ENCODE measurements at regions of chr10 and their contacts with region 1.

Region 1: GRCh38 chr10:71569775-71570588 is 149.6 kb downstream of the C10orf105 start:
- DNase-seq: peak; percentile 79 to 88
- H3K4me3 ChIP-seq: no peak overlapping the region
- H3K4me3 Mint-ChIP-seq: no peak overlapping the region
- H3K27ac Mint-ChIP-seq: no peak overlapping the region
- H3K4me1 ChIP-seq: no peaks in the 10 kb centered on the region
- H3K4me1 Mint-ChIP-seq: no peaks in the 10 kb centered on the region
- H3K27me3 ChIP-seq: no peaks in the 10 kb centered on the region
- H3K27me3 Mint-ChIP-seq: peaks cover 5% of the 10 kb centered on the region
- CTCF ChIP-seq: peak; percentile 94 to 95

Region 2: GRCh38 chr10:71303569-71303907 is 266.4 kb before region 1 on chr10:
- CTCF ChIA-PET with region 1: no interaction called
- POLR2A ChIA-PET with region 1: no interaction called
- intact Hi-C with region 1: no loop called
- DNase-seq: no peak
- H3K4me3 ChIP-seq: no peak overlapping the region
- H3K4me3 Mint-ChIP-seq: no peak overlapping the region
- H3K27ac Mint-ChIP-seq: no peak overlapping the region
- H3K4me1 ChIP-seq: no peaks in the 10 kb centered on the region
- H3K4me1 Mint-ChIP-seq: no peaks in the 10 kb centered on the region
- H3K27me3 ChIP-seq: no peaks in the 10 kb centered on the region
- H3K27me3 Mint-ChIP-seq: no peaks in the 10 kb centered on the region
- CTCF ChIP-seq: no peak

Region 3: GRCh38 chr10:71383972-71384687 is 185.9 kb before region 1 on chr10:
- CTCF ChIA-PET with region 1: interaction called, 12 read pairs
- POLR2A ChIA-PET with region 1: no interaction called
- intact Hi-C with region 1: loop called (anchors 1 kb)
- DNase-seq: peak; percentile 80 to 89
- H3K4me3 ChIP-seq: no peak overlapping the region
- H3K4me3 Mint-ChIP-seq: no peak overlapping the region
- H3K27ac Mint-ChIP-seq: no peak overlapping the region
- H3K4me1 ChIP-seq: no peaks in the 10 kb centered on the region
- H3K4me1 Mint-ChIP-seq: no peaks in the 10 kb centered on the region
- H3K27me3 ChIP-seq: no peaks in the 10 kb centered on the region
- H3K27me3 Mint-ChIP-seq: peaks cover 6% of the 10 kb centered on the region
- CTCF ChIP-seq: peak; percentile 97 to 98

Region 4: DNA sequence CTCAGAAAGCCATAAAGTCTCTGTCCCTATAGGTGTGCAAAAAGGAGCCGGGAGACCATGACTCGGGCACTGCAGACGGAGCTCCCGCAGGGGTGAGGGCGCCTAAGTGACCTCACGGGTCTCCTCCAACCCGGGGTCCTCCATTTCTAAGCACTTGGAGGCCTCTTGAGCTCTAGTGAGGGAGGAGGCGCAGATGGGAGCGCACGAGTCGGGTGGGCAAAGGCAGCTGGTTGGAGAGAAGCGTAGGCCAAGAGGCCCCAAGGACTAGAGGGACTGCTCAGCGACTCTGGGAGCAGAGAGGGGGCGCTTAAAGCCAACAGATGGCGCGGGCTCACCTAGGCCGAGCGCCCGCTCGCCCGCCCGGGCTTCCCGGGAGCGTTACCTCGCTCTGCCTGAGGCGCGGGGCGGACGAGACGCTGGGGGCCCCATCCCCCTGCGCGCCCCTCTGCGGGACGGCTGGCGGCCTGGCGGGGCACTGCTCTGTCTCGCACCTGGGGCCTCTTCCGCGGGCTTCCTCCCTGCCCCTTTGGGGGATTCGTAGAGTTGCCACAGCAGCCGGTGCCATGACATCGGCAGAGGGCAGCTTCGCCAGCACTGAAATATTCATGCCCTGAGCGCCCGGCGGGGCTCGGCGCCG is 173.8 kb before region 1 on chr10:
- CTCF ChIA-PET with region 1: interaction called, 12 read pairs
- POLR2A ChIA-PET with region 1: no interaction called
- intact Hi-C with region 1: loop called (anchors 1 kb)
- DNase-seq: peak in 1 of 2 experiments; percentile 59
- H3K4me3 ChIP-seq: peak overlapping the region; percentile 36
- H3K4me3 Mint-ChIP-seq: peak overlapping the region; percentile 60
- H3K27ac Mint-ChIP-seq: no peak overlapping the region
- H3K4me1 ChIP-seq: peaks cover 18% of the 10 kb centered on the region
- H3K4me1 Mint-ChIP-seq: no peaks in the 10 kb centered on the region
- H3K27me3 ChIP-seq: peaks cover 4% of the 10 kb centered on the region
- H3K27me3 Mint-ChIP-seq: peaks cover 32% of the 10 kb centered on the region
- CTCF ChIP-seq: peak; percentile 23 to 50

Region 5: GRCh38 chr10:71486484-71487114 is 83.4 kb before region 1 on chr10:
- CTCF ChIA-PET with region 1: interaction called, 5 read pairs
- POLR2A ChIA-PET with region 1: no interaction called
- intact Hi-C with region 1: loop called (anchors 1 kb)
- DNase-seq: peak; percentile 65 to 75
- H3K4me3 ChIP-seq: no peak overlapping the region
- H3K4me3 Mint-ChIP-seq: no peak overlapping the region
- H3K27ac Mint-ChIP-seq: no peak overlapping the region
- H3K4me1 ChIP-seq: no peaks in the 10 kb centered on the region
- H3K4me1 Mint-ChIP-seq: no peaks in the 10 kb centered on the region
- H3K27me3 ChIP-seq: no peaks in the 10 kb centered on the region; the same call in 1 of the 2 replicates
- H3K27me3 Mint-ChIP-seq: peaks cover 11% of the 10 kb centered on the region
- CTCF ChIP-seq: peak; percentile 63 to 74

Region 6: DNA sequence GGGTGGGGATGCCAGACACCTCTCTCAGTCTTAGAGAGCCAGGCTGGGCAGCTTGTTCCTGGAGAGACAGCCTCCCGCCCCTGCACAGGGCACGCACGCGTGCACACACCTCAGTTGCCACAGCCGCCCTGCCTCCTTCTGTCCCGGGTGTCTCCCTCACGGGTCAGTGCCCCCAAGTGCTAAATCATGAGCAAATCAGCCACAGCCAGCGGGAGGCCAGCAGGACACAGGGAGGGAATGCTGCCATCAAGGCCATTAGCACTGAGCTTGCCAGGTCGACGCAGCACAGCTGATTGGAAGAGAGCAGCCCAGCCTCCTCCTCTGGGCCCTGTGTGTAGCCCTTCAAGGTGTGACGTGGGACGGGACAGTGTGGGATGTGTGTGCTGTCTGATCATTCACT is 42.8 kb before region 1 on chr10:
- CTCF ChIA-PET with region 1: interaction called, 32 read pairs
- POLR2A ChIA-PET with region 1: no interaction called
- intact Hi-C with region 1: loop called (anchors 1 kb)
- DNase-seq: no peak
- H3K4me3 ChIP-seq: no peak overlapping the region
- H3K4me3 Mint-ChIP-seq: no peak overlapping the region
- H3K27ac Mint-ChIP-seq: no peak overlapping the region
- H3K4me1 ChIP-seq: peaks cover 12% of the 10 kb centered on the region
- H3K4me1 Mint-ChIP-seq: no peaks in the 10 kb centered on the region
- H3K27me3 ChIP-seq: no peaks in the 10 kb centered on the region; the same call in 1 of the 2 replicates
- H3K27me3 Mint-ChIP-seq: no peaks in the 10 kb centered on the region
- CTCF ChIP-seq: no peak

Region 7: DNA sequence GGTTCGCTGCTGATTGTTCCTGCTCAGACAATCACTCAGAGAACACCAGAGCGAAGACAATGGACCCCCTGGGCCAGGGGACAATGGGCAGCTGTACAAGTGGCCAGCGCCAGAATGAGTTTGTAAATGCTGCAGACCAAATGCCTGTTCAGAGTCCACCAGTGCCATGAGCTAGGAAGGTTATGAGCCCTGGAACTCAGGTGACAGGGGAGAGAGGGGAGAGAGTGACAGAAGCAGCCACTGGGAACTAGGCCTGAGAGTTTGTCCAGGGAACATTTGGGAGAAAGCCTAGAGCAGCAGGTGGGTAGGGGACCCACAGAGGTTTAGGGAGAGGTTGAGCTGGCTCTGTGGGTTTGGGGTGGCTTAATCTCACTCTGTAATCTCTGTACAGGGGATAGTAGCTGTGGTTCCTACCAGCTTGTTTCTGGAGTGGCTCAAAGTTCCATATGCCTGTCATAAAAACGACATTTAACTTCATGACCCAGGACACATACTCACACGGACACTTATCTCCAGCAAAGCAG is 89.2 kb after region 1 on chr10:
- CTCF ChIA-PET with region 1: no interaction called
- POLR2A ChIA-PET with region 1: no interaction called
- intact Hi-C with region 1: no loop called
- DNase-seq: no peak
- H3K4me3 ChIP-seq: no peak overlapping the region
- H3K4me3 Mint-ChIP-seq: no peak overlapping the region
- H3K27ac Mint-ChIP-seq: no peak overlapping the region
- H3K4me1 ChIP-seq: no peaks in the 10 kb centered on the region
- H3K4me1 Mint-ChIP-seq: peaks cover 7% of the 10 kb centered on the region
- H3K27me3 ChIP-seq: no peaks in the 10 kb centered on the region
- H3K27me3 Mint-ChIP-seq: no peaks in the 10 kb centered on the region
- CTCF ChIP-seq: no peak